GM18951 (cell line): ENCODE measurements at regions of chr3 and their contacts with region 1.

Region 1: DNA sequence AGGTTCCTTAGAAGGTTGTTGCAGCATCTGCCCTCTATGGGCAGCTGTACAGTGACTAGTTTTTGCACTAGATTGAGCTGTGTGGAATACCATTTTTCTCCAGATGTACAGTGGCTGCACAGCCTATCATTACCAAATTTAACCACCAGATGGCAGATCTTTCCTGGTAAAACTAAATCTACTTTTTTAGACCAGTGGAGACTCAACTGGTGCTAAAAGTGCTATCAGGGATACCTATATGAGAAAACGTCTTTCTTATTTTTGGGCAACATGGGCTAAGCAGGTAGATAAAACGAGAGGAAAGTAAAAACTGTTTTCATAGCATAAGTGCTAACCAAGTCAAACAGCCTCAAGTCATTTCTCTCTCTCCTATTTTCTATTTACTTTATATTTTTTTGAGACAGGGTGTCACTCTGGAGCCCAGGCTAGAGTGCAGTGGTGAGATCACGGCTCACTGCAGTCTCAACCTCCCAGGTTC is 21.2 kb downstream of the IGSF10 start:
- POLR2A ChIP-seq: no peak

Region 2: DNA sequence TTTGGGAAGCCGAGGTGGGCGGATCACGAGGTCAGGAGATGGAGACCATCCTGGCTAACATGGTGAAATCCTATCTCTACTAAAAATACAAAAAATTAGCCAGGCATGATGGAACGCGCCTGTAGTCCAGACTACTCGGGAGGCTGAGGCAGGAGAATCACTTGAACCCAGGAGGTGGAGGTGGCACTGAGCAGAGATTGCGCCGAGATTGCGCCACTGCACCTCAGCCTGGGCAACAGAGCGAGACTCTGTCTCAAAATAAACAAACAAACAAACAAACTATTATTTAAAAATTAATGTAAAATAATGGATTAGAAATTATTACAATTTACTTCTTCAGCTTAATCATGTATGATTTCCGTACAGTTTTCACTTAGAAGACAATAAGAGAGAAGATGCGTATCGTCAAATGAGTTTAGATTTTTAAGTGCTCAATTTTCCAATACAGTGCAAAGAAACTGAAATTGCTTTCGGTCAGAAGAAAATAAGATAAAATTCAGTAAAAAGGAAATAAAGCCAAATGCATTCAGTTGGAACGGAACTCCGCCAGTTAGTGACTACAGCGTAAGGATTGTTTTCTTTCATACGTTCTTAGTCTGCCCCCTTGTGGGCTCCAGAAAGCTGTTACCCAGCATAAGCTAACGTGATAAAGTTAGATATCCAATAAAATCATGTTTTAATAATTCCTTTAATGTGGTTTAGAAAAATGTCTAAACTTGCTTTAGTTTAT is 399.1 kb after region 1 on chr3:
- in situ Hi-C with region 1: loop called (anchors 25 kb)
- POLR2A ChIP-seq: no peak

Region 3: DNA sequence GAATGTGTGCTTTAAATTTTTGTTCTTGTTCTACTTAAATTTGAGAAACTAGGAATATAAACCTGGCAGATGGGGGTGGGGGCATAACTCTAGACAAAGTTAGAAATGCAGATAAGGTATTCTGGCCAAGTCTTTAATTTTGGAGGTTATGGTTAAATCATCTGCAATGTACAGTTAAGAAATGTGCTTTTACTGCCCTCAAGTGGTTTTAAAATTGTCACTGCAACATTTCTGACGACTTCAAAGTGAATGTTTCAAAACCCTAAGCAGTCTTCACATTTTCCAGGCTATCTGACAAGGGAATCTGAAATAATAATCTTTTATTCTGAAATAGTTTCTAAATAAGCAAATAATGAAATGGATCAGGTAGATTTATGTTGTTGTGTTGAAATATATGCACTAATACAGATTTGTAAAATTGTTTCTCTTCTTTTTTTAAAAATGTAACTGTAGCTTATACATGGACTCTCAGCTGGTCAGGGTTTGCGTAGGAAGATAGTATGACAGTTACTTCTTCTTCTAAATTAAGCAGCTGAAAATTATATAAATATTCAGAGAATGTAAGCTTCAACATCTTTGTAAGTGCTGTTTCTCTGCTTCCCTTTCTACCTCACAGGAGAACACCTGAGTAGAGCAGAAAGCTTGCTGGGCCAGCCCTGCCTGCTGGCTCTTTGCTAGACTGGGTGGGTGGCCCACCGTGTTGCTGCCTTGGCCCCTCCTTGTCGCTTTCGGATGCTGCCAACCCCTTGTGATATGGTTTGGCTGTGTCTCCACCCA is 478.8 kb after region 1 on chr3:
- in situ Hi-C with region 1: loop called (anchors 10 kb)
- POLR2A ChIP-seq: no peak